ENCODE measurements at regions of chr3 and their contacts with region 1.

Region 1: DNA sequence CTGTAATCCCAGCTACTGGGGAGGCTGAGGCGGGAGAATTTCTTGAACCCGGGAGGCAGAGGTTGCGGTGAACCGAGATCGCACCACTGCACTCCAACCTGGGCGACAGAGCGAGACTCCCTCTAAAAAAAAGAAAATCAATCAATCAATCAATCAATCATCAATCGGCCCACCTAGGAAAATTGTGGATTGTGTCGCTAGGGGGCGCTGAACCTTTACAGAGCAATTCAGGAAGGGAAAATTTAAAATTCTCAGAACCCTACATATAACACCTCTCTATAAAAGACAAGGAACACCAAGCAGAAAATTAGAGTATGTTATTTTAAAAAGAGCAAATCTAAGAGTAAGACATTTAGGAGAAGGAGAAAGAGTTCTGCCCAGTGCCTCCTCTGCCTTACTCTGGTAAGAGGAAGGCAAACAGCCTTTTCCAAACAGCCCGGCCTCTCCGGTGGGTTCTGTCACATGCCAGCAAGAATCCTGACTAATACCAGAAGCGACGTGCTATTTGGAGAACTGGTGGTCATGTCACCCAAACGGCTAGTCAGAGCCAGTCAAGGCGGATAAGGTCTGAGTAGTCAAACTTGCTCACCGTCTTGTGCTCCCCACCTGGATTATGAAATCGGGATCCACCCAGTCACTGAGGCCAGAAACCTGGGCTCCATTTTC is 22.3 kb upstream of the SMCO1 start:
- DNase-seq: peak; percentile 40 to 62 (median 49)
- H3K4me3 ChIP-seq: no peak overlapping the region
- H3K4me3 Mint-ChIP-seq: no peak overlapping the region
- H3K27ac ChIP-seq: no peak overlapping the region
- H3K27ac Mint-ChIP-seq: peak overlapping the region in 1 of 7 donors; percentile 19
- H3K4me1 ChIP-seq: no peaks in the 10 kb centered on the region
- H3K4me1 Mint-ChIP-seq: peaks cover 0 to 3% (median 1%) of the 10 kb centered on the region in 4 donors
- H3K27me3 ChIP-seq: no peaks in the 10 kb centered on the region
- H3K27me3 Mint-ChIP-seq: peaks cover 0 to 2% of the 10 kb centered on the region in 2 donors

Region 2: DNA sequence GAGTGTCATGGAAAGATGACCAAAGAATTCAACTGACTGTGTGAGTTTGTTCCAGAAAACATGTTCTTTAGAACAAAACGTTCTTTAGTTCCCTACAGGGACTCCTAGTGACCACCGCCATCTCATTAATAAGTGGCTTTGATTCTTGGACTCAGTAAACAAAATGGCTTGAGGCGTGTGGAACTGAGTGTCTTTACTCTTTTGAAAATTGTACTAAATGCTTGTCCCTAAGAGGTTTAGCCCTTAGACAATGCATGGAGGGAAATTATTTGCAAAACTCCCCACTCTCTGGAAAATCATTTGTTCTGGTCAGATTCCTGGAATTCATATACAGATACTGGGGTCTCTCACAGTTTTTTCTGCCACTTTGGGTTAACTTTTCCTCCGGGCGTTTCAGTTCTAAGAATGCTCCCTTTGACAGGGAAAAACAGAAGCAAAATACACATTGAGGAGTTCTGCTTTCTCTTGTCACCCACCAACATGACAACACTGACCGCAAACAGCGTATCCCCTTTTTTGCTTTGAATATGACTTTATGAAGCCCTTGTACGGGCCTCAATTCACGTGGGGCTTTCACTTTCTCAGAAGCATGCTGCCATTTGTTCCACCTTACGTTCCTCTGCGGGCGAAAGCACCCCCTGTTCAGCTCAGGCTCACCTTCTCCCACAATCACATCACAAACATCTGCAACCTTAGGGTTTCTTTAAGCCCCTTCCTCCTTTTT is 86.8 kb after region 1 on chr3:
- CTCF ChIA-PET with region 1: no interaction called
- POLR2A ChIA-PET with region 1: no interaction called
- intact Hi-C with region 1: no loop called
- DNase-seq: no peak
- H3K4me3 ChIP-seq: no peak overlapping the region
- H3K4me3 Mint-ChIP-seq: peak overlapping the region; percentile 77 to 87 (median 83)
- H3K27ac ChIP-seq: no peak overlapping the region
- H3K27ac Mint-ChIP-seq: peak overlapping the region in 6 of 7 donors; percentile 37 to 92 (median 82)
- H3K4me1 ChIP-seq: peaks cover 17% of the 10 kb centered on the region
- H3K4me1 Mint-ChIP-seq: peaks cover 11 to 26% (median 20%) of the 10 kb centered on the region in 4 donors
- H3K27me3 ChIP-seq: no peaks in the 10 kb centered on the region
- H3K27me3 Mint-ChIP-seq: no peaks in the 10 kb centered on the region

Region 3: DNA sequence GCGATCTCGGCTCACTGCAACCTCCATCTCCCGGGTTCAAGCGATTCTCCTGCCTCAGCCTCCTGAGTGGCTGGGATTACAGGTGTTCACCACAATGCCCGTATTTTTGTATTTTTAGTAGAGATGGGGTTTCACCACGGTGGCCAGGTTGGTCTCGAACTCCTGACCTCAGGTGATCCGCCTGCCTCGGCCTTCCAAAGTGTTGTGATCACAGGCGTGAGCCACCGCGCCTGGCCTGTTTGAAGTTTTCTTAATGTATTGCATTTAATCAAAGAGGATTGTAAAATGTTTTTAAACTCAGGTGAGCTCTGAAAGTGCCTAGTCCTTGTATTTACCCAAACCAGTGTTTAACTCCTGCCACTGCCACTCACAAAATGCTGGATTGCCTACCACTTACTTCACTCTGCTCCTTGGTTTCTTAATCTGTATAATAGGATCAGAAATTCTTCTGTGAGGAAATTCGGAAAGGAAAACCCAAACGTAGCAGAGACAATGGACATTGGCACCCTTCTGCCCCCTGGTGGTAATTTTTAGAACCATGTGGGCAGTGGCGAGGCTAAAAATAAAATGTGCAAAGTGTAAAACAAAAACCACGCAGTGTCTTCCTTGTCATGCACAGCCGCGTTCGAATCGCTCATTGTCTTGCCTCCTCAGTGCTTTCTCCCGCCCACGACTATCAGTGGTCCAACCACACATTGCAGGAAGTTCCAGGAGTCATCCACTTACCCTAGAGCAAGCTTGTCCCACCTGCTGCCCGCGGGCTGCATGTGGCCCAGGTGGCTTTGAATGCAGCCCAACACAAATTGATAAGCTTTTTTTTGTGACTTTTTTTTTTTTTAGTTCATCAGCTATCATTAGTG is 147.3 kb after region 1 on chr3:
- CTCF ChIA-PET with region 1: interaction called, 12 read pairs
- POLR2A ChIA-PET with region 1: no interaction called
- intact Hi-C with region 1: loop called (anchors 1 kb)
- DNase-seq: peak; percentile 61 to 75 (median 65)
- H3K4me3 ChIP-seq: peak overlapping the region in 1 of 2 donors; percentile 40
- H3K4me3 Mint-ChIP-seq: peak overlapping the region; percentile 39 to 80 (median 70)
- H3K27ac ChIP-seq: no peak overlapping the region
- H3K27ac Mint-ChIP-seq: peak overlapping the region in 5 of 7 donors; percentile 19 to 81 (median 64)
- H3K4me1 ChIP-seq: peaks cover 11% of the 10 kb centered on the region
- H3K4me1 Mint-ChIP-seq: peaks cover 10 to 16% (median 14%) of the 10 kb centered on the region in 4 donors
- H3K27me3 ChIP-seq: no peaks in the 10 kb centered on the region
- H3K27me3 Mint-ChIP-seq: no peaks in the 10 kb centered on the region

Region 4: DNA sequence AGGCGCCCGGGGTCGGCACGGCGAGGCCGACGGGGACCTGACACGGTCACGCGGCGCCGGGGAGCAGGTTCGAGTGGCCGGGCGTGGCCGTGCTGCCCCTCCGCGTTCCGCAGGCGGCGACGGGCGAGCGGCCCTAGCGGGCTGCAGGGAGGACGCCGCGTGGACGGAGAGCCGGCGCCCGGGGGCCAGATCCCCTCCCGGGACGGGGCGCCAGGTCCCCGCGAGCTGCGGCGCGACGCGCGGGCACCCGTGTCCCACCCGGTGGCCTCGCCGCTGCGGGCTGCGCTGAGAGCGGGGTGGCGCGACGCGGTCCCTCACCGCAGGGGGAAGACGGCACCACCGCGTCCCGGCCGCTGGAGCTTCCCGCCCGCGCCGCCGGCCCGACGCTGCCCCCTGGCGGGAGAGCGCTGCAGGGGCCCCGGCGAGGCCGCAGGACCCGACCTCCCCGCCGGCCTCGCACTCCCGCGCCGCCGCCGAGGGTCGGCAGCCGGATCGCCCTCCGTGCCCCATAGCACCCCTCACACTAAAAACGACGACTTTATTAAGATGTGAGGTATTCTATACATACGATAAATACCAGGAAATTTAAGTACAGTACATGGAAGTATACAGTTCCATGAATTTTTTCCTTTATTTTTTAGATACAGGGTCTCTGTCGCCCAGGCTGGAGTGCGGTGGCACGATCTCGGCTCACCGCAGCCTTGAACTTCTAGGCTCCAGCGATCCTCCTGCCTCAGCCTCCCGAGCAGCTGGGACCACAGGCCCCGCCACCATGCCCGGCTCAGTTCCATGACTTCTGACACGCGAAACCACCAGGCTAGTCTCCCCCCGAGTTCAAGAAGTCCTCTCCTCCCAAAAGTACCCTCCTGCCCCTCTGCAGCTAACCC is 432.5 kb after region 1 on chr3:
- CTCF ChIA-PET with region 1: no interaction called
- POLR2A ChIA-PET with region 1: no interaction called
- intact Hi-C with region 1: loop called (anchors 2 kb)
- DNase-seq: peak; percentile 53 to 69 (median 68)
- H3K4me3 ChIP-seq: peak overlapping the region in 1 of 2 donors; percentile 64
- H3K4me3 Mint-ChIP-seq: peak overlapping the region; percentile 67 to 86 (median 80)
- H3K27ac ChIP-seq: peak overlapping the region; percentile 4
- H3K27ac Mint-ChIP-seq: peak overlapping the region in 3 of 7 donors; percentile 17 to 71 (median 41)
- H3K4me1 ChIP-seq: peaks cover 8% of the 10 kb centered on the region
- H3K4me1 Mint-ChIP-seq: peaks cover 0 to 16% (median 4%) of the 10 kb centered on the region in 4 donors
- H3K27me3 ChIP-seq: no peaks in the 10 kb centered on the region
- H3K27me3 Mint-ChIP-seq: peaks cover 0 to 1% of the 10 kb centered on the region in 2 donors

Measured in CD4-positive, alpha-beta memory T cell (primary cell).